ENCODE measurements at regions of chr2 and their contacts with region 1.

Region 1: DNA sequence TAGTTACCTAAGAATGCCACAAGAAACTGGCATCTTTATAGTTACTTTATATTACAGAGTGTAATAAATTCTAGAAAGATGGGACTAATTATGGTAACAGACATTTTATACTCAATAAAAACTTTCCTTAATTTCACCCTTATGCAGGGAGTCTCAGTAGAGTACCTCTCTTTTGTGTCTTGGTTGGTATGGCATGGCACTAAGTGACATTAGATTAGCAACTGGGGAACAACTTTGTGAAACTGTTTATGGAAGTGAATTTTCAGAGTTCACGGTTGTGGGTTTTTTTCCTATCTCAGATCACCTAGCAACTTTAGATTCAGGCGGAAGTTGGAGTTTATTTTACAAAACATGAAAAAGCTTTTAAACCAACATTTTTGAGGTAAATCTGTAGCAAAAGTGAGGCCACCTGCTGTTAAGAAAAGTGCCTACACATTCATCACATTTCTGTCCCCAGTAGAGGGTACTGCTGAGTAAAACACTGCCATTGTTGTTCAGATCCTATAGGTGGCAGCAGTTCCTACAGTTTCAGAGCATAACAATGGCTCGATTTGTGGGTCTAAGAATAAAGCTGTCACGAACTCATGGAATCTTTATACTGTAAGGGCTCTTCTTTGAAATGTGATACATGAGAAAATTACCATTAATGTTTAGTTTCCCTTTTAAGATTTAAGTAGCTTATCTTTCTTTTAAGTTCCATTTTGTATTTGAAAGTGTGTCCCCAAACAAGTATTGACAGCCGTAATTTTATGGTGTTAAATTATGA is 117.6 kb downstream of the CAMKMT start:
- DNase-seq: no peak
- ATAC-seq: peak; percentile 88 to 100 (median 96)
- H3K4me3 ChIP-seq: no peak overlapping the region
- H3K27ac ChIP-seq: no peak overlapping the region
- H3K4me1 ChIP-seq: no peaks in the 10 kb centered on the region
- H3K27me3 ChIP-seq: no peaks in the 10 kb centered on the region
- CTCF ChIP-seq: peak; percentile 98

Region 2: DNA sequence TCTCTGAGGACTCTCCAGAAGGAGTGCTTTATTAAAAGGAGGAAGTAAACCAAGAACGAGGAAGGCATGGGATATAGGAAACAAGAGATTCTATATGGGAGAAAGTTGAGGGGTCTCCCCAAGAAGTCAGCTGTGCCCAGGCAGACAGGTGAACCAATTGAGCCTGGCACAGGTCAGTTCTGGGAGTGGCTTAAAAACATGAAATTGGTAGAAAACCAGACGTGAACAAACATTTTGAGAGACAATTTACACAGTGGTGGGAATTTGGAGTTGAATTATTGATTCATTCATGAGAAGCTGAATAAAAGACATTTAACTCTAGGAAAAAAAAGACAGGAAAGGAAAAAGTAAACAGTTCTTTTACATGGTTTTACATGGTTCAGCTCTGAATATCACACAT is 825.8 kb before region 1 on chr2:
- intact Hi-C with region 1: no loop called
- DNase-seq: no peak
- ATAC-seq: no peak
- H3K4me3 ChIP-seq: no peak overlapping the region
- H3K27ac ChIP-seq: no peak overlapping the region
- H3K4me1 ChIP-seq: no peaks in the 10 kb centered on the region
- H3K27me3 ChIP-seq: peaks cover 0 to 5% (median 0%) of the 10 kb centered on the region in 3 donors
- CTCF ChIP-seq: no peak

Region 3: GRCh38 chr2:44044281-44044720 is 435.0 kb before region 1 on chr2:
- intact Hi-C with region 1: loop called in 1 of 2 experiments (anchors 10 kb)
- DNase-seq: peak; percentile 84 to 94
- ATAC-seq: peak; percentile 99 to 100 (median 100)
- H3K4me3 ChIP-seq: no peak overlapping the region
- H3K27ac ChIP-seq: peak overlapping the region; percentile 61
- H3K4me1 ChIP-seq: peaks cover 6% of the 10 kb centered on the region
- H3K27me3 ChIP-seq: no peaks in the 10 kb centered on the region
- CTCF ChIP-seq: peak; percentile 90

Region 4: GRCh38 chr2:44392338-44392943 is 86.9 kb before region 1 on chr2:
- intact Hi-C with region 1: loop called in 1 of 2 experiments (anchors 5 kb)
- DNase-seq: peak in 1 of 2 donors; percentile 24
- ATAC-seq: no peak
- H3K4me3 ChIP-seq: no peak overlapping the region
- H3K27ac ChIP-seq: no peak overlapping the region
- H3K4me1 ChIP-seq: no peaks in the 10 kb centered on the region
- H3K27me3 ChIP-seq: no peaks in the 10 kb centered on the region
- CTCF ChIP-seq: peak; percentile 64

Region 5: DNA sequence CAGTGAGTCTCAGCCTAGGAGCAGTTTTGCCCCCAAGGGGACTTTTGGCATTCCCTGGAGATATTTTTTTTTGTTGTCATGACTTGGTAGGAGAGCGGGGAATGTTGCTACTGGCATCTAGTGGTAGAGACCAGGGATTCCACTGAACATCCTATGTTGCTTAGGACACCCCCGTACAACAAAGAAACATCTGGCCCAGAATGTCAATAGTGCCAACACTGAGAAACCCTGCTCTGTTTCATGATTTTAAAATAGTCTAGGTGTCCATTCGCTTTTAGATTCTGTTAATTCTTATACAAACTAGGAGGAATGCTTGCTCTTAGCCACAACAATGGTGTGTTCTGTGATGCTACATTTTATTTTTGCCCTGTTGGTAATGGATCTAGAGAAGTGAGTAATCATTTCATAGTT is 236.4 kb after region 1 on chr2:
- intact Hi-C with region 1: loop called in 1 of 2 experiments (anchors 10 kb)
- DNase-seq: no peak
- ATAC-seq: peak in 3 of 4 donors; percentile 45 to 73 (median 49)
- H3K4me3 ChIP-seq: no peak overlapping the region
- H3K27ac ChIP-seq: no peak overlapping the region
- H3K4me1 ChIP-seq: no peaks in the 10 kb centered on the region
- H3K27me3 ChIP-seq: no peaks in the 10 kb centered on the region
- CTCF ChIP-seq: peak; percentile 44

Region 6: DNA sequence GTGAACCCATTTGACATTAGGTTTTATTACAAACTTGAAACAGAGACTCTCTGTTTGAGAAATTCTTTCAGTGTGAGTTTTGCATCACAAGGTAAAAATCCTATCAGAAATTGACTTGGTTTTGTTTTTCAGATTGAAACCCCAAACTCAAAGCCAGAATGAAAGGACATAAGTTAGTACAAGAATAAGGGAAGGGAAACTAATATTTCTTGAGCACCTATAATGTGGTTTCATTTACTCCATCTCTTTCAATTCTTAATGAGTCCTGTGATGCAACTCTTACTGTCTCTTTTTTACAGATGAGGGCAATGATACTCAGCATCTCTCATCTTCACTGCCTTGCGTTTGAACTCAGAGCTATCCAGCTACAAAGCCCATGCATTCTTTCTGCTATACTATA is 252.2 kb after region 1 on chr2:
- intact Hi-C with region 1: no loop called
- DNase-seq: no peak
- ATAC-seq: no peak
- H3K4me3 ChIP-seq: no peak overlapping the region
- H3K27ac ChIP-seq: no peak overlapping the region
- H3K4me1 ChIP-seq: peaks cover 1% of the 10 kb centered on the region
- H3K27me3 ChIP-seq: no peaks in the 10 kb centered on the region
- CTCF ChIP-seq: no peak